Body of pancreas (tissue), 4 donors: ENCODE measurements at regions of chr21 and their contacts with region 1.

Region 1: DNA sequence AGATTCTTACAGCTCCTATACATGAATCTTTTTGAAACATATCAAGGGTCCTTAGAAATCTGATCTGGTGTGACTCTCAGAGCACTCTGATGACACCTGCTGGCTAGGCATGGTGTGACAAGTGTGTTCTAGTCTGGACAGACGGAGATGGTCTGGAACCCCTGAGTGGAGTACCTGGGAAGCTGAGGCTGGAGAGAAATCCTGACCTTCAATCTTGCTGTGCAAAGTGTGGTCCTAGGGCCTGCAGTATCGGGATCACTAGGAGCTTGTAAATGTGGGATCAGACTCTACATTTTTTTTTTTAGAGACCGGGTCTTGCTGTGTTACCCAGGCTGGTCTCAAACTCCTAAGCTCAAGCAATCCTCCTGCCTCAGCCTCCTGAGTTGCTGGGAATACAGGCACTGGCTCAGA is 78.6 kb upstream of the SOD1 start:
- DNase-seq: peak; percentile 64 to 81 (median 72)
- ATAC-seq: peak; percentile 59
- H3K4me3 ChIP-seq: no peak overlapping the region
- H3K27ac ChIP-seq: no peak overlapping the region
- H3K4me1 ChIP-seq: no peaks in the 10 kb centered on the region
- H3K27me3 ChIP-seq: no peaks in the 10 kb centered on the region
- CTCF ChIP-seq: peak; percentile 42 to 79 (median 71)
- POLR2A ChIP-seq: no peak

Region 2: GRCh38 chr21:30733026-30733425 is 847.8 kb before region 1 on chr21:
- intact Hi-C with region 1: no loop called
- DNase-seq: no peak
- ATAC-seq: no peak
- H3K4me3 ChIP-seq: no peak overlapping the region
- H3K27ac ChIP-seq: no peak overlapping the region
- H3K4me1 ChIP-seq: no peaks in the 10 kb centered on the region
- H3K27me3 ChIP-seq: no peaks in the 10 kb centered on the region
- CTCF ChIP-seq: no peak
- POLR2A ChIP-seq: no peak

Region 3: GRCh38 chr21:31107871-31108270 is 473.0 kb before region 1 on chr21:
- intact Hi-C with region 1: loop called (anchors 10 kb)
- DNase-seq: peak in 1 of 4 donors; percentile 32
- ATAC-seq: no peak
- H3K4me3 ChIP-seq: no peak overlapping the region
- H3K27ac ChIP-seq: peak overlapping the region in 1 of 4 donors; percentile 34
- H3K4me1 ChIP-seq: no peaks in the 10 kb centered on the region
- H3K27me3 ChIP-seq: no peaks in the 10 kb centered on the region
- CTCF ChIP-seq: no peak
- POLR2A ChIP-seq: no peak

Region 4: GRCh38 chr21:31198575-31198974 is 382.3 kb before region 1 on chr21:
- intact Hi-C with region 1: loop called (anchors 5 kb)
- DNase-seq: peak in 1 of 4 donors; percentile 13
- ATAC-seq: peak; percentile 47
- H3K4me3 ChIP-seq: no peak overlapping the region
- H3K27ac ChIP-seq: no peak overlapping the region
- H3K4me1 ChIP-seq: peaks cover 7% of the 10 kb centered on the region
- H3K27me3 ChIP-seq: no peaks in the 10 kb centered on the region
- CTCF ChIP-seq: peak; percentile 35 to 72 (median 66)
- POLR2A ChIP-seq: no peak

Region 5: GRCh38 chr21:31335957-31336738 is 244.7 kb before region 1 on chr21:
- intact Hi-C with region 1: loop called (anchors 10 kb)
- DNase-seq: peak in 1 of 4 donors; percentile 9
- ATAC-seq: no peak
- H3K4me3 ChIP-seq: no peak overlapping the region
- H3K27ac ChIP-seq: no peak overlapping the region
- H3K4me1 ChIP-seq: no peaks in the 10 kb centered on the region
- H3K27me3 ChIP-seq: no peaks in the 10 kb centered on the region
- CTCF ChIP-seq: no peak
- POLR2A ChIP-seq: no peak

Region 6: DNA sequence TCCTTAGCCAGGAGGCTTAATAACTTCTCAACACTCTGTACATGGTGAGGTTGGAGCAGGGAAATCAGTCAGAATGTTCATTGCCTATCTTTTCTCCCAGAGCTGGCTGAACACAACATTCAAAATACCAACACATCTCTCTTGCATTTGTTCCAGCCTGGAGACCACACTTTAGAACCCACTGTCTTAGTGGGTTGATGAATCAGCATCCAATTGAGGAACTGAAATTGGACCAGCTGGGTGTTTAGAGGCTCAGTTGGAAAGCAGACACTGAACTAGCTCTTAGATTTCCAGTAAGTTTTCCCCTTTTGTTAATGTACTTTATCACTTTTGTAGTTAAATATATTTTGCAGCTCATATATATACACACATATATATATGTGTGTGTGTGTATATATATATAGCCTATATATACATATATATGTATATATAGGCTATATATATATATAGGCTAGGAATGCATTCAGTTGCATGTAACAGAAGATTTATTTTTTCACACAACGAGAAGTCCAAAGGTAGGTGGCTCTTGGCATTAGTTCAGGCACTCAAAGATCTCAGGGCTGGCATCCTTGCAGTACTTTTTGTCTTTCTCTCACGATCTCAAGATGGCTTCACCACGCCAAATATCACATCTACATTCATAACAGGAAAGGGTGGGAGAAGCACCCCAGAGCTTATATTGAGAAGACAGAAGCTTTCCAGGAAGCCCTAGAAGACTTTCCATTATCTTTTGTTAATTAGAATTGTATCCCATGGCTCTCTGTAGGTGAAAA is 256.9 kb after region 1 on chr21:
- intact Hi-C with region 1: no loop called
- DNase-seq: peak in 1 of 4 donors; percentile 2
- ATAC-seq: no peak
- H3K4me3 ChIP-seq: no peak overlapping the region
- H3K27ac ChIP-seq: no peak overlapping the region
- H3K4me1 ChIP-seq: no peaks in the 10 kb centered on the region
- H3K27me3 ChIP-seq: no peaks in the 10 kb centered on the region
- CTCF ChIP-seq: no peak
- POLR2A ChIP-seq: no peak